ENCODE measurements at regions of chr20 and their contacts with region 1.

Region 1: GRCh38 chr20:51404298-51405060 is 138.0 kb downstream of the NFATC2 start:
- DNase-seq: peak; percentile 85
- H3K4me3 Mint-ChIP-seq: peak overlapping the region; percentile 52
- H3K27ac Mint-ChIP-seq: peak overlapping the region; percentile 96
- H3K4me1 Mint-ChIP-seq: peaks cover 93% of the 10 kb centered on the region
- H3K27me3 Mint-ChIP-seq: no peaks in the 10 kb centered on the region

Region 2: GRCh38 chr20:50731055-50731871 is 673.2 kb before region 1 on chr20 and contains the start of gene PARD6B:
- intact Hi-C with region 1: loop called (anchors 10 kb)
- DNase-seq: peak; percentile 99
- H3K4me3 Mint-ChIP-seq: peak within 1 kb of the TSS; percentile 86
- H3K27ac Mint-ChIP-seq: peak within 1 kb of the TSS; percentile 92
- H3K4me1 Mint-ChIP-seq: peaks cover 38% of the 10 kb centered on the region
- H3K27me3 Mint-ChIP-seq: peaks cover 1% of the 10 kb centered on the region
- total RNA-seq, gene PARD6B: 6.3 and 7.1 TPM in 2 replicates

Region 3: GRCh38 chr20:51385646-51386530 is 18.6 kb before region 1 on chr20:
- intact Hi-C with region 1: loop called (anchors 1 kb)
- DNase-seq: no peak
- H3K4me3 Mint-ChIP-seq: peak overlapping the region; percentile 50
- H3K27ac Mint-ChIP-seq: no peak overlapping the region
- H3K4me1 Mint-ChIP-seq: peaks cover 78% of the 10 kb centered on the region
- H3K27me3 Mint-ChIP-seq: no peaks in the 10 kb centered on the region

Region 4: DNA sequence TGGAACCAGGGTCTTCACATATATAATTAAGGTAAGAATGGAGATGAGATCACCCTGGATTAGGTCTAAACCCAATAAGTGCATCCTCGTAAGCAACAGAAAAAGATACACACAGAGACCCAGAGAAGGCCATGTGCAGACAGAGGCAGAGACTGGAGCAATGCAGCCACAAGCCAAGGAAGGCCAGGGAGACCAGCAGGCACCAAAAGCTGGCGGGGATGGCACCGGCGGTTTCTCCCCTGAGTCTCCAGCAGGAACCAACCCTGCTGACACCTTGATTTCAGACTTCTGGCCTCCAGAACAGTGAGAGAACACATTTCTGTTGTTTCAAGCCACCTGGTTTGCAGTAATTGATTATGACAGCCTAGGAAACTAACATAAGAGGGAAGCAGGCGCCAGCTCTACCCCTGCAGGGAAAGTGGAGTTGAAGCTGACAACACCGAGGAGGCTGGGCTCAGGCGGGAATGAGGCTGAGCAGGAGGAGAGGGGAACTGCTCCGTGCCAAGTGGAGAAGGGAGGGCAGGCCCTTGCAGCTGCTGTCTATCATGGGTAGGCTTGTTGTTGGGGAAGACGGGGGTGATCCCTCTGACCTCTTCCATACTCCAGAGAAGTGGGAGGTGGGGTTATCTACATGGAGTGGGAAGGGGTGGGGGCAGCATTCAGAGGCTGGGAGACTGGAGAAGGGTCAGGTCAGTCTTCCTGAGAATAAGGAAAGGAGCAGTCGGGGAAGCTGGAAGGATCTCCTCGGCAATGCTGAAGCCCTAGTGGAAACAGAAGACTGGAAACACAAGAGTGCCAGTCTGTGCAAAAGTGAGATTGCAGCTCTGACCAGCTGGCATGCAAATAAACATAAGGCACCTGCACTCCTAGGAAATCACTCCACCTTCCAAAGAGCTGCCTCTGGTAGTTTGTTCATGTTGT is 65.4 kb after region 1 on chr20:
- intact Hi-C with region 1: loop called (anchors 2 kb)
- DNase-seq: no peak
- H3K4me3 Mint-ChIP-seq: no peak overlapping the region
- H3K27ac Mint-ChIP-seq: peak overlapping the region; percentile 83
- H3K4me1 Mint-ChIP-seq: peaks cover 63% of the 10 kb centered on the region
- H3K27me3 Mint-ChIP-seq: no peaks in the 10 kb centered on the region

Region 5: DNA sequence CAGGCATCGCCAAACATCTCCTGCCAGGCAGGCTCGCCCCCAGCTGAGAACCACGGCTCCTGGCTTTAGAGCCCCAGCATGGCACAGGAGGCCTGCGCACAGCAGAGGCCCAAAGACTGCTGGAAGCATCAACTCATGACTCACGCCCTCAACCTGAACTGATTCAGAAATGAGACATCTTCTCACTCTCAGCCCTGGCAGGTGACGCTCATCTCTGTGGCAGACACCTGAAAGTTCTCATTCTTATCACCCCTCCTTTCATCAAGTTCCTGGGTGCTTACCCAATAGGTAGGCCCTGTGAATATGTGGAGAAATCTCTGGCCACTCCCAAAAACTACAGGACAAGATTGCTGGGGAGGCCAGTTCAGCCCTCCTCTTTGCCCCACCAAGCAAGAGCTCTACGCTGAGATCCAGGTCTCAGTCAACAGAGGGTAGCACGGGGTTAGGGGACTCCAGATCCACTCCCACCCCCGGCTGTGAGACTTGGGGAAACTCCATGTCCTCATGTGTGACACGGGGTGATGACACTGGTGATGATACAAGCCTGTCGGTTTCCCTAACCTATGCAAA is 126.7 kb after region 1 on chr20:
- intact Hi-C with region 1: loop called (anchors 1 kb)
- DNase-seq: peak; percentile 58
- H3K4me3 Mint-ChIP-seq: peak overlapping the region; percentile 84
- H3K27ac Mint-ChIP-seq: peak overlapping the region; percentile 99
- H3K4me1 Mint-ChIP-seq: peaks cover 92% of the 10 kb centered on the region
- H3K27me3 Mint-ChIP-seq: no peaks in the 10 kb centered on the region

Region 6: DNA sequence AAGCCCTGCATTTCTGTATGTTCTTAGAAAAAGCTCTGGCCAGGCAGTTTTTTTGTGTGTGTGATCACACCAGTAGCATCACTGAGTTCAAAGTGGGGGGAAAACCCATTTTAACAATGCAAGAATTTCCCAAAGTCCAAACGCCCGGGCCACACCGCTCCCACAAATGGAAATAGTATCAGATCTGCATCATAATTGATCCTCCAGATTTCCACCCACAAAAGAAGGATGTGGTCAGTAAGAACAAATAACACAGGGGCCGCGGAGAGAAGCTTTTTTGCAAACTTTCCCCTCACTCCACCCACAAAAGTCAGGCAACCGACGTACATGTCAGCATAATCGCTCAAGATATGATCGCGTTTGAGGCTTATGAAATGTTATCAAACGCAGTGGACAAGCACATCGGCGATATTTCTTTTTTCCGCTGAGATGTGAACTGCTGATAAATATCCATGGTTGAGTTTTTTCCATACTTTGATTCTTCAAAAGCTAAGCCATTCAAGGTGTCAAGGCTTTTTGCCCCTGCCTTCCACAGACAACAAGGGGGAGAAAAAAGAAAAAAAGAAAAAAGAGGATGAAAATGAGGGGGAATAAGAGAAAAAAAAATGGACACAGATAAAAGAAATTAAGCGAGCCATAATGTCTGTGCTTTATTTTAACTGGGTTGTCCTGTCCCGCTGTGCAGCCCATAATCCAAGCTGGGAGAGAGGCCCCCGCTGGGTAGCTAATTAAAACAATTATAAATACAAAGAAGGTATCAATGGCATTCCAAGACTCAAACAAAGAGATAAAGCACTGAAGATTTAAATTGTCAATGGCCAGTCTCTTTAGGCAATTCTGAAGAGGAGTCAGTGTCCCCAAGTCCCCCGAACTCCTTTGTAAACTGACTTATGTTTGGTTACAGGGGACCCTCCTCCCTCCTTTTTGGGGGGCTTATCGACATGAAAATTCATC is 643.6 kb after region 1 on chr20:
- intact Hi-C with region 1: loop called (anchors 5 kb)
- DNase-seq: peak; percentile 38
- H3K4me3 Mint-ChIP-seq: peak overlapping the region; percentile 48
- H3K27ac Mint-ChIP-seq: peak overlapping the region; percentile 84
- H3K4me1 Mint-ChIP-seq: peaks cover 34% of the 10 kb centered on the region
- H3K27me3 Mint-ChIP-seq: peaks cover 1% of the 10 kb centered on the region

Measured in activated T-helper 1 cell treated with anti-CD3 and anti-CD28 coated beads, Interleukin-12 subunit alpha, Interleukin-12 subunit beta, Interleukin-2, Interleukin-4 antibody, amounts not matched to agents 30 ng/mL and 10 ng/mL and 1 ng/mL, durations not matched to agents 14 hours and 24 hours and 36 hours (primary cell).